HepG2 (cell line): ENCODE measurements at regions of chr4 and their contacts with region 1.

Region 1: DNA sequence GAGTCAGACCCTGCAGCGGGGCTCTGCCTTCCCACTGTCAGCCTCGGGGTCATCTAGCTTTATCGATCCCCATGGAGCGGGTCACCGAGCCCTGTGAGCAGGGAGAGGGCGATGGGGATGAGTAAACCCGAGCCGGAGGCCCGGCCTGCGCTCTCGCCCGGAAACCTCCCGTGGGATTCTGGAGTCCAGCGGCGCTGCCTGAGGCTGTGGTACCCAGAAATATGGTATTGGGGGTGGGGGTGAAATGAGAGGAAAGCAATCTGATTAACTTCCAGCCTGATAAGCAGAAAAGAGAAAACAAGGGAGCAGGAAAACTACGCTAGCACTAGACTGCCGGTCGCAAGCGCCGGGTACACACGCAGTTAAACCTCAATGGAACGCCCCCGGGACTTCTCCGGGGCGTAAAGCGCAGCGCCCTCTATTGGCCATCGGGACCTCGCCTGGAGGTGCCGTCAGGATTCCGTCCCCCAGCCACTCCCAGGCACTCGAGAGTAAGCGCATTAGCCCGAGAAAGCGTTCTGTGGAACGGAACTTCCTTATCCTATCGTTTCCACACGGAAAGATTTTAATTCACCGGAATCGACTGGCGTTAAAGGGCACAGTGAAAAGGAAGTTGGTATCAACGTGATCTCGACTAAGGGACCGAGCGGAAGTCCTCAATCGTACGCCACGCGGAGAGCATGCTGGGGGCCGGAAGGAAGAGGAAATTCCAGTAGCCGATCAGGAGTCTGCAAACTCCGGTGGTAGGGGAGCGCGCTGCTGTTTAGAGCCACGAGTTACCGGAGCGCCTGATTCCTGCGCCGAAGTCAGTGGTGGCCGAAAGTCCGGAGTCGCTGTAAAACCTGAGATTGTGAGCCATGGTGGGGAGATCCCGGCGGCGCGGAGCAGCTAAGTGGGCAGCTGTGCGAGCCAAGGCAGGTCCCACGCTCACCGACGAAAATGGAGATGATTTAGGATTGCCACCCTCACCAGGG is at the start of gene UTP3:
- DNase-seq: peak; percentile 98
- ATAC-seq: peak; percentile 95
- H3K4me3 ChIP-seq: peak within 1 kb of the TSS; percentile 83 to 94 (median 86)
- H3K27ac ChIP-seq: peak within 1 kb of the TSS; percentile 86
- H3K4me1 ChIP-seq: peaks cover 25% of the 10 kb centered on the region
- H3K27me3 ChIP-seq: no peaks in the 10 kb centered on the region; a peak in 1 of 5 replicates
- CTCF ChIP-seq: peak; percentile 98
- EP300 ChIP-seq: no peak; a peak in 1 of 4 replicates
- POLR2A ChIP-seq: peak; percentile 83 to 90
- RAD21 ChIP-seq: peak; percentile 60
- total RNA-seq, gene UTP3: 19.5 and 27.5 TPM in 2 replicates

Region 2: GRCh38 chr4:70399319-70399718 is 288.8 kb before region 1 on chr4:
- CTCF ChIA-PET with region 1: no interaction called
- POLR2A ChIA-PET with region 1: no interaction called
- in situ Hi-C with region 1: no loop called
- intact Hi-C with region 1: no loop called
- DNase-seq: no peak
- ATAC-seq: no peak
- H3K4me3 ChIP-seq: no peak overlapping the region
- H3K27ac ChIP-seq: no peak overlapping the region
- H3K4me1 ChIP-seq: no peaks in the 10 kb centered on the region
- H3K27me3 ChIP-seq: no peaks in the 10 kb centered on the region
- CTCF ChIP-seq: no peak
- EP300 ChIP-seq: no peak
- POLR2A ChIP-seq: no peak
- RAD21 ChIP-seq: no peak

Region 3: DNA sequence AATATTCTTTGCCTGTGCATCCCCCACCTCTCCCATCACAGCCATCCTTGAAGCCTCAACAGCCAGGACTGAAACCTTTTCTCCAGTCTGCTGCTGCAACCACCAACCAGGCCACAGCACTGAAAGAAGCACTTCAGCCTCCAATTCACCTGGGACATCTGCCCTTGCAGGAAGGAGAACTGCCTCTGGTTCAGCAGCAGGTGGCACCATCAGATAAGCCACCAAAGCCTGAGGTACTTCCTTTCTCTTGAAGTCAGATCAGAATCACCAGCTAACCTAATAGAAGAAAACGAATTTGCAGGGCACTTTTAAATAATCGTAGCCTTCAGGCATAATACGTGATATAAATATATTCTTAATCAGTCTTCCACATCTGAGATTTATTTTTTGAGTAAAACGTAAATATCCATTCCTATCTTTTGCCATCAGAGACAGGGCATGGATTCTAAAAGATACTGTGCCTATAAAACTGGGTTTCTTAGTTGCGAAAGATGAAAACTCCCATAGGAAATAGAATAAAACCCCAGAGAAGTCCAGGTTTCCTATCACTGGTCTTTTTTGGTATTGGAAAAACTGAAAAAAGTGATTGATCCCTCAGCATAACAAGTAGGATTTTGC is 86.6 kb before region 1 on chr4:
- CTCF ChIA-PET with region 1: no interaction called
- POLR2A ChIA-PET with region 1: no interaction called
- in situ Hi-C with region 1: no loop called
- intact Hi-C with region 1: loop called (anchors 5 kb)
- DNase-seq: peak; percentile 62
- ATAC-seq: peak; percentile 95
- H3K4me3 ChIP-seq: no peak overlapping the region
- H3K27ac ChIP-seq: no peak overlapping the region
- H3K4me1 ChIP-seq: no peaks in the 10 kb centered on the region
- H3K27me3 ChIP-seq: no peaks in the 10 kb centered on the region
- CTCF ChIP-seq: peak; percentile 87
- EP300 ChIP-seq: no peak
- POLR2A ChIP-seq: no peak
- RAD21 ChIP-seq: peak; percentile 69

Region 4: GRCh38 chr4:70651864-70652506 is 36.1 kb before region 1 on chr4:
- CTCF ChIA-PET with region 1: interaction called, 8 read pairs
- POLR2A ChIA-PET with region 1: no interaction called
- in situ Hi-C with region 1: no loop called
- intact Hi-C with region 1: loop called (anchors 5 kb)
- DNase-seq: peak; percentile 27
- ATAC-seq: peak; percentile 79
- H3K4me3 ChIP-seq: no peak overlapping the region; a peak in 1 of 6 replicates
- H3K27ac ChIP-seq: no peak overlapping the region
- H3K4me1 ChIP-seq: peaks cover 7% of the 10 kb centered on the region; the same call in 1 of the 2 replicates
- H3K27me3 ChIP-seq: peaks cover 0 to 3% of the 10 kb centered on the region in 2 experiments; a peak in 1 of 5 replicates
- CTCF ChIP-seq: peak; percentile 70
- EP300 ChIP-seq: no peak
- POLR2A ChIP-seq: no peak
- RAD21 ChIP-seq: peak; percentile 58

Region 5: DNA sequence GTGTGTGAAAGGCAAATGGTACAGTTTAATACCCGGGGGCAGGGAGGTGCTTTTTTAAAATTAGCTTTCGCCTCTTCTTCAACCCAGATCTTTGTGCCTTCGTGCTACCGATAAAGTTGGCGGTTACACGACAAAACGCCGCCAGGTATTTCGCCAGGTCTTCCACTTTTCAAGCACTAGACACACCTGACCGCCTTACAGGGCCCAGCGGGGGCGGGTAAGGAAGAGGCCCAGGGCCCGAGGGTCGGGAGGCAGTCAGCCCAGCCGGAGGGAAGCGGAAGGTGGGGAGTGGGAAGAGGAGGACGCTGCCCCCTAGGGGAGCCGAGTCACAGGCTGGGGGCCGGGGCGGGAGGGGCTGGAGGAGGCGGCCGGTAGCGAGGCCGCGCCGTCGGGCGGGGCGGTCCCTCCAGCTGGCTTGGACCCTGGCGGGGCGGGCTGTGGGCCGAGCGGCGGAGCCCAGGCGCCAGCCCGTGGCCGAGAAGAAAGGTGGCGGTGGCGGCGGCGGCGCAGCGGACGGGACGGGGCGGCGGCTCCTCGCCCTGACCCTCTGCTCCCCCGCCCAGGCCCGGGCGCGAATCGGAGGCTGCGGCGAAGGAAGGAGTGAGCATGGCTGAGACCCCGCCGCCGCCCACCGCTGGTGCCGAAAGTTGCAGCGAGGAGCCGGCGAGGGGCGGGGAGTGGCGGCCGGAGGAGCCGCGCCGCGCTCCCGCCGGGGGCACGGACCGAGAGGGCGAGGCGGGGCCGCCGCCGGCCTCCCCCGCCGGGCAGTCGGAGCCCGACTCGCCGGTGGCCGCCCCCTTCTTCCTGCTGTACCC is 16.4 kb after region 1 on chr4:
- CTCF ChIA-PET with region 1: interaction called, 3 read pairs
- POLR2A ChIA-PET with region 1: interaction called, 75 read pairs
- in situ Hi-C with region 1: no loop called
- intact Hi-C with region 1: loop called (anchors 1 kb)
- DNase-seq: peak; percentile 67
- ATAC-seq: peak; percentile 85
- H3K4me3 ChIP-seq: peak overlapping the region; percentile 72 to 88 (median 80)
- H3K27ac ChIP-seq: peak overlapping the region; percentile 91
- H3K4me1 ChIP-seq: peaks cover 42% of the 10 kb centered on the region
- H3K27me3 ChIP-seq: no peaks in the 10 kb centered on the region; a peak in 1 of 5 replicates
- CTCF ChIP-seq: peak; percentile 85
- EP300 ChIP-seq: no peak
- POLR2A ChIP-seq: peak; percentile 56 to 75; a peak in 3 of 4 replicates
- RAD21 ChIP-seq: peak; percentile 12; the same call in 1 of the 2 replicates

Region 6: GRCh38 chr4:70839589-70840093 is 151.5 kb after region 1 on chr4 and contains the start of gene GRSF1:
- CTCF ChIA-PET with region 1: no interaction called
- POLR2A ChIA-PET with region 1: no interaction called
- in situ Hi-C with region 1: no loop called
- intact Hi-C with region 1: loop called (anchors 5 kb)
- DNase-seq: peak; percentile 79
- ATAC-seq: peak; percentile 91
- H3K4me3 ChIP-seq: peak within 1 kb of the TSS; percentile 88 to 91 (median 90)
- H3K27ac ChIP-seq: peak within 1 kb of the TSS; percentile 75
- H3K4me1 ChIP-seq: peaks cover 31% of the 10 kb centered on the region
- H3K27me3 ChIP-seq: no peaks in the 10 kb centered on the region
- CTCF ChIP-seq: 0 out of 2 replicates have a peak, but pooled peaks have one; percentile 13
- EP300 ChIP-seq: no peak
- POLR2A ChIP-seq: peak; percentile 89 to 92
- RAD21 ChIP-seq: peak; percentile 43; the same call in 1 of the 2 replicates
- total RNA-seq, gene GRSF1: 103 and 129 TPM in 2 replicates

Region 7: GRCh38 chr4:70901984-70902576 is 214.0 kb after region 1 on chr4 and contains the start of gene MOB1B:
- CTCF ChIA-PET with region 1: no interaction called
- POLR2A ChIA-PET with region 1: no interaction called
- in situ Hi-C with region 1: no loop called
- intact Hi-C with region 1: loop called (anchors 10 kb)
- DNase-seq: peak; percentile 77
- ATAC-seq: peak; percentile 94
- H3K4me3 ChIP-seq: peak within 1 kb of the TSS; percentile 90 to 97 (median 94)
- H3K27ac ChIP-seq: peak within 1 kb of the TSS; percentile 70
- H3K4me1 ChIP-seq: peaks cover 17% of the 10 kb centered on the region
- H3K27me3 ChIP-seq: no peaks in the 10 kb centered on the region; a peak in 1 of 5 replicates
- CTCF ChIP-seq: peak; percentile 48
- EP300 ChIP-seq: no peak
- POLR2A ChIP-seq: peak; percentile 43 to 82; a peak in 3 of 4 replicates
- RAD21 ChIP-seq: 0 out of 2 replicates have a peak, but pooled peaks have one; percentile 8
- total RNA-seq, gene MOB1B: 4.0 and 6.8 TPM in 2 replicates

Region 8: DNA sequence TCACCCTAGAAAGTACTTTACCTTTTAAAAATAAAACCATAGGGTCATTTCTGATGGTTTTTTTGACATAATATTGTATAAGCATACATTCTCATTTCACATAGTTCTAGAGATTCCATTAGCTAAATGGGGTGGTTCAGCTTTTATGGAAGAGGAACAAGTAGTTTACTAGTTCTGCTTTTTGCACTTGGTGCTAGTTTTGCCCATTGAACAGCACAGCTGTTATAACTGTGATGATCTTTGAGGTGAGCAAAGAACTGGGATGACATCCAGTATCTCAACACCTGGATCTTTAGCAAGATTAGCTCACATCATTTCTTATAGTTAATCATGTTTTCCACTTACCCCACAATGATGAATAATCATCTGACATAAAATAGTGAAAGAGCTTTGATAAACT is 255.0 kb after region 1 on chr4:
- CTCF ChIA-PET with region 1: no interaction called
- POLR2A ChIA-PET with region 1: no interaction called
- in situ Hi-C with region 1: no loop called
- intact Hi-C with region 1: no loop called
- DNase-seq: no peak
- ATAC-seq: no peak
- H3K4me3 ChIP-seq: no peak overlapping the region
- H3K27ac ChIP-seq: no peak overlapping the region
- H3K4me1 ChIP-seq: peaks cover 8% of the 10 kb centered on the region; the same call in 1 of the 2 replicates
- H3K27me3 ChIP-seq: no peaks in the 10 kb centered on the region
- CTCF ChIP-seq: no peak
- EP300 ChIP-seq: no peak
- POLR2A ChIP-seq: no peak
- RAD21 ChIP-seq: no peak

Region 9: DNA sequence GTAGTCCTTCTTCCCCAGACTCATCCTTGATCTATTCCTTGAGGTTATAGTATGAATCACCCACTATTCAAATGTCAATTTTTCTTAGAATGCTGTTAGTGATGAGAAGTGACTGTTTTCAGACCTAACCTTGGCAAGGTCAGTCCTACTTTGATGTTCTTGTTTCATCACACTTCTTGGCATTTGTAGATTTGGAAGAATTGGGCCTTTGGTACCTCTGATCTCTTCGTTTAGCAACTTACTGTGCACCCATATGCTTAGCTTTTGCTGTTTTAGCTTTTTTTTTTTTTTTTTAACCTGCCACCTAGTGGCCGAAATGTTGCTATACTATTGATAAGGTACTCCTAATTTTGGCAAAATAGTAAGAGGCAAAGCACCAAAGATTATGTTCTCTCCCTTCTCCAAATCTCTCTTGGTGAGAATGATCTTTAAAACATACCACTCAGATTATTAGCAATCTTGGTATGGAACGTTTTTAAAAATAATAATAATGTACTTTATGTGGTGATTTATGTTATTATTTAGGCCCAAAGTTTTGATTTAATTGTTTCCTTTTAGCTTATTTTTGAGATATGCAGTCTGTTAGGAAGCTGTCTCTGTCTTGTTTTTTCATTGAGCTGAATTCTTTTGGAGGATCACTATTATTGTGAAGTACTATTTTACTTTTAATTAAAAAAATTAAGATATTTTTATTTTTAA is 321.9 kb after region 1 on chr4:
- CTCF ChIA-PET with region 1: no interaction called
- POLR2A ChIA-PET with region 1: no interaction called
- in situ Hi-C with region 1: no loop called
- intact Hi-C with region 1: no loop called
- DNase-seq: peak; percentile 50
- ATAC-seq: peak; percentile 74
- H3K4me3 ChIP-seq: no peak overlapping the region
- H3K27ac ChIP-seq: no peak overlapping the region
- H3K4me1 ChIP-seq: no peaks in the 10 kb centered on the region
- H3K27me3 ChIP-seq: no peaks in the 10 kb centered on the region
- CTCF ChIP-seq: peak; percentile 59
- EP300 ChIP-seq: no peak
- POLR2A ChIP-seq: no peak
- RAD21 ChIP-seq: no peak

Region 10: DNA sequence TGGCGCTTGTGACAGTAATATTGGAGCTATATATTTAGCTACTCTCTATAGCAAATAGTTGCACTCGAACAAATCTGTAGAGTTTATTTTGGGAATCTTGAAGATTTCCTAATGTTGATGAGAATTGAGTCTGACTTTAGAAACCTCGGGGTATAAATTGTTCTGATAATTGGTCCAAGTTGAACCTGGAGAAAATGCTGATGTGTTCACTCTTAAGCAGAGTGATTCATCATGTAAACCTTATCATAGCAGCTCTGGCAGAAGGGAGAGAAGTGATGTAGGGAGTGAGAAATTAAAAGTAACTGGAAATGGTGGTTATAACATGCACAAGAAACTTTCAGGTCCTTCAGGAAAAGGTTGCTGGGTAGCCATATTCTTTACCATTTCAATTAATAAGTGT is 634.3 kb after region 1 on chr4:
- CTCF ChIA-PET with region 1: no interaction called
- POLR2A ChIA-PET with region 1: no interaction called
- in situ Hi-C with region 1: no loop called
- intact Hi-C with region 1: no loop called
- DNase-seq: no peak
- ATAC-seq: no peak
- H3K4me3 ChIP-seq: no peak overlapping the region
- H3K27ac ChIP-seq: no peak overlapping the region
- H3K4me1 ChIP-seq: no peaks in the 10 kb centered on the region
- H3K27me3 ChIP-seq: no peaks in the 10 kb centered on the region
- CTCF ChIP-seq: no peak
- EP300 ChIP-seq: no peak
- POLR2A ChIP-seq: no peak
- RAD21 ChIP-seq: no peak